Panc1 (cell line): ENCODE measurements at regions of chr16 and their contacts with region 1.

Region 1: GRCh38 chr16:62149631-62150030 is 113.4 kb upstream of the CDH8 start:
- DNase-seq: no peak
- ATAC-seq: no peak
- H3K4me3 ChIP-seq: no peak overlapping the region
- H3K27ac ChIP-seq: no peak overlapping the region
- H3K4me1 ChIP-seq: no peaks in the 10 kb centered on the region
- H3K27me3 ChIP-seq: no peaks in the 10 kb centered on the region
- CTCF ChIP-seq: no peak

Region 2: DNA sequence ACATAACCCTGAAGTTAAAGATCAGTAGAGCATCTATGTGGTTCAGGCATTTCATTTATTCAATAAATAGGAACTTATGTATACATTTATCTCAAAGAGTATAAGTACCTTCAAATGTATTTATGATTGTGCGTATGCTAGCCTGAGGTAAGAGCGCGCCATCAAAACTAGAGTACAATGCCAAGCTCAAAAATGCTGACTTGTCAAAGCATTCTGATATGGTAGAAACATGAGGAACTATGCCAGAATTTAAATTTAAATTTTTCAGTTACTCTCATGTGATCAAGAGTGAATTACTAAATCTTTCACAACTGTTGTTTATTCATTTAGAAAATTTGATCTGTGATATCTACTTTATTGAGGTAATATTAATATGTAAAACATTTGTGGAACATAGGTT is 112.1 kb after region 1 on chr16:
- CTCF ChIA-PET with region 1: no interaction called
- POLR2A ChIA-PET with region 1: no interaction called
- in situ Hi-C with region 1: no loop called
- intact Hi-C with region 1: no loop called
- DNase-seq: no peak
- ATAC-seq: no peak
- H3K4me3 ChIP-seq: no peak overlapping the region
- H3K27ac ChIP-seq: no peak overlapping the region
- H3K4me1 ChIP-seq: no peaks in the 10 kb centered on the region
- H3K27me3 ChIP-seq: no peaks in the 10 kb centered on the region
- CTCF ChIP-seq: no peak

Region 3: DNA sequence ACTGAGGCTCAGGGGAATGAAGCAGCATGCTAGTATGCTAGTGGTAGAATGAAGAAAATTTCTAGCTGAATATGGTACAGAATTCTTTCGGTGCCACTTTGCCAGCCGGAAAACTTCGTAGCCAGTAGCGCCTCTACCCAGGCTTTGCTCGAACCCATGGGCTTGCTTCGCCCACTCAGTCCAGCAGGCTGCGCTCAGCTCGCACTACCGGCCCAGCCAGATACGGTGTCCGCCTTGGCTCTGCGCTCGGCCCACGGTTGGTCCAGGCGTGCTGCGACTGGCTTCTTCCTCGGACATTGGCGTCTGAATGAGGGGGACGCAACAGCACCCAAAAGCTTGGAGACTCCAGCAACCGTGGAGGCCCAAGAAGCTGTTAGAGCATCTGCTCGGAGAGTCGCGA is 259.1 kb after region 1 on chr16:
- CTCF ChIA-PET with region 1: no interaction called
- POLR2A ChIA-PET with region 1: interaction called, 10 read pairs
- in situ Hi-C with region 1: no loop called
- intact Hi-C with region 1: no loop called
- DNase-seq: no peak
- ATAC-seq: no peak
- H3K4me3 ChIP-seq: no peak overlapping the region
- H3K27ac ChIP-seq: no peak overlapping the region
- H3K4me1 ChIP-seq: no peaks in the 10 kb centered on the region
- H3K27me3 ChIP-seq: no peaks in the 10 kb centered on the region
- CTCF ChIP-seq: no peak